ENCODE measurements at regions of chr22 and their contacts with region 1.

Region 1: GRCh38 chr22:31080848-31081649 is at the start of gene SMTN:
- ATAC-seq: peak; percentile 59 to 92 (median 86)
- H3K4me3 ChIP-seq: peak within 1 kb of the TSS; percentile 46 to 77 (median 51)
- H3K27ac ChIP-seq: peak within 1 kb of the TSS; percentile 35 to 86
- H3K4me1 ChIP-seq: peaks cover 0 to 16% of the 10 kb centered on the region in 2 donors
- total RNA-seq, gene SMTN: 3.2 to 16.9 (median 9.9) TPM

Region 2: GRCh38 chr22:30947816-30948454 is 133.1 kb before region 1 on chr22:
- in situ Hi-C with region 1: loop called in 3 of 9 experiments (anchors 10 to 25 kb)
- ATAC-seq: peak in 7 of 8 experiments; percentile 30 to 50 (median 38)
- H3K4me3 ChIP-seq: no peak overlapping the region
- H3K27ac ChIP-seq: no peak overlapping the region
- H3K4me1 ChIP-seq: peaks cover 9 to 20% of the 10 kb centered on the region in 2 donors

Region 3: DNA sequence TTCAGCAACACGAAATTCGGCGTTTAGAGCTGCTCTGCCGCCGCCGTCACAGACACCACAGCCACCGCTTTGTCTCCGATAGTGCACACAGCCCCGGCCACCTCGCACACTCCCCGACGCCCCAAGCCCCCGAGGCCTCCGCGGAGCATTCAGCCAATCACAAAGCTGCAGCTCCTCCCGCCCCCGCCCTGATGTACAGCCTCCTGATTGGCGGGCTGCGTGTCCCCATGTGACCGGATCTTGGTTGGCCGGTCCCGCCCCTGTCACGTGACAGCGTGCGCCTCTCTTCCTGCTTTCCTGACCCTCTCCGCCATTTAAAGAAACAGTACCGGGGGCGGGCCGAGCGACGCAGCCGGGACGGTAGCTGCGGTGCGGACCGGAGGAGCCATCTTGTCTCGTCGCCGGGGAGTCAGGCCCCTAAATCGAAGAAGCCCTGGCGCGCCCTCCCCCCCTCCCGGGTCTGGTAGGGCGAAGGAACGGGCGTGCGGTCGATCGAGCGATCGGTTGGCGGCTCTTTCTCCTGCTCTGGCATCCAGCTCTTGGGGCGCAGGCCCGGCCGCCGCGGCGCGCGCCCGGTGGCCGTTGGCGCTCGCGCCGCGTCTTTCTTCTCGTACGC is 112.0 kb before region 1 on chr22 and contains the start of gene TUG1:
- in situ Hi-C with region 1: loop called in 3 of 9 experiments (anchors 10 to 25 kb)
- ATAC-seq: peak; percentile 85 to 97 (median 95)
- H3K4me3 ChIP-seq: peak within 1 kb of the TSS; percentile 91 to 98 (median 95)
- H3K27ac ChIP-seq: peak within 1 kb of the TSS; percentile 98 to 99
- H3K4me1 ChIP-seq: peaks cover 12 to 29% of the 10 kb centered on the region in 2 donors
- total RNA-seq, gene TUG1: 50.0 to 98.1 (median 76.4) TPM

Region 4: DNA sequence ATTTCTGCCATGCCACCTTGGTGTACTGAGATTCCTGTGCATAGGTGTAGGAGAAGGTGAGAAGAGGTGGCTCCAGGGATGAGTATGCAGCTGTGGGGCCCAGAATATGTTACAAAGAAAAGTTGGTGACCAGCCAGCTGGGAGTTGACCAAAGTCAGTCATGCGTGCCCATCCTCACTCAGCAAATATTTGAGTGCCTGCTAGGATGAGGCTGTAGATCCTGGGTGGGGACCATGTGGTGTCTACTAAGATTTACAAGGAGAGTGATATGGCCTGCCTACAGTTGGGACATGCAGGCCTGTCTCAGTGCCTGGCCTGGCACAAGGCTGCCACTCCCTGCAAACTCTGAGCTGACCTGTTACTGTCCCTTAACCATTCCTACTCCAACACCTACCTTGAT is 98.3 kb after region 1 on chr22:
- in situ Hi-C with region 1: no loop called
- ATAC-seq: peak in 4 of 8 experiments; percentile 64 to 95 (median 92)
- H3K4me3 ChIP-seq: no peak overlapping the region
- H3K27ac ChIP-seq: no peak overlapping the region
- H3K4me1 ChIP-seq: no peaks in the 10 kb centered on the region